ENCODE measurements at regions of chr2 and their contacts with region 1.

Region 1: GRCh38 chr2:25115902-25116301 is 52.5 kb downstream of the POMC start:
- DNase-seq: no peak
- ATAC-seq: 0 out of 2 replicates have a peak, but pooled peaks have one; percentile 33
- H3K4me3 ChIP-seq: no peak overlapping the region
- H3K27ac ChIP-seq: no peak overlapping the region
- H3K4me1 ChIP-seq: no peaks in the 10 kb centered on the region
- H3K27me3 ChIP-seq: no peaks in the 10 kb centered on the region
- CTCF ChIP-seq: no peak

Region 2: DNA sequence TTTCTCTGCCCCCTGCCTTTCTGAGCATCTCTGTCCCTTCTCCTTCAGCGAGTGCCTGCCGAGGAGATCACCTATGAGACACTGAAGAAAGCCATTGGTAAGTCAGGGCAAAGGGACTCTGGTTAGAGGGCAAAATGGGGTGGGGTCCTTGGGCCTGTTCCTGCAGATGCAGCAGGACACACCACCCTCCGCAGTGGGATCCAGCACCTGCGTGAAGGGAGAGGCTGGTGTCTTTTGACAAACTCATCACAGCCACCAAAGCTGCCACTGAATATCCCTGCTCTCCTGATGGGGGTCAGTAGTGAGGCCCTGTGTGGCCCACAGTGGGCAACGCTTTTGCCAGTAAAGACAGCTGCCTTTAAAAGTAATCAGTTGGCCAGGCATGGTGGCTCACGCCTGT is 33.7 kb after region 1 on chr2:
- CTCF ChIA-PET with region 1: no interaction called
- POLR2A ChIA-PET with region 1: interaction called, 10 read pairs
- in situ Hi-C with region 1: no loop called
- intact Hi-C with region 1: no loop called
- DNase-seq: no peak
- ATAC-seq: no peak
- H3K4me3 ChIP-seq: no peak overlapping the region
- H3K27ac ChIP-seq: no peak overlapping the region
- H3K4me1 ChIP-seq: no peaks in the 10 kb centered on the region
- H3K27me3 ChIP-seq: no peaks in the 10 kb centered on the region
- CTCF ChIP-seq: no peak

Measured in Panc1 (cell line).